Heart right ventricle (tissue), 16 donors: ENCODE measurements at regions of chr13 and their contacts with region 1.

Region 1: DNA sequence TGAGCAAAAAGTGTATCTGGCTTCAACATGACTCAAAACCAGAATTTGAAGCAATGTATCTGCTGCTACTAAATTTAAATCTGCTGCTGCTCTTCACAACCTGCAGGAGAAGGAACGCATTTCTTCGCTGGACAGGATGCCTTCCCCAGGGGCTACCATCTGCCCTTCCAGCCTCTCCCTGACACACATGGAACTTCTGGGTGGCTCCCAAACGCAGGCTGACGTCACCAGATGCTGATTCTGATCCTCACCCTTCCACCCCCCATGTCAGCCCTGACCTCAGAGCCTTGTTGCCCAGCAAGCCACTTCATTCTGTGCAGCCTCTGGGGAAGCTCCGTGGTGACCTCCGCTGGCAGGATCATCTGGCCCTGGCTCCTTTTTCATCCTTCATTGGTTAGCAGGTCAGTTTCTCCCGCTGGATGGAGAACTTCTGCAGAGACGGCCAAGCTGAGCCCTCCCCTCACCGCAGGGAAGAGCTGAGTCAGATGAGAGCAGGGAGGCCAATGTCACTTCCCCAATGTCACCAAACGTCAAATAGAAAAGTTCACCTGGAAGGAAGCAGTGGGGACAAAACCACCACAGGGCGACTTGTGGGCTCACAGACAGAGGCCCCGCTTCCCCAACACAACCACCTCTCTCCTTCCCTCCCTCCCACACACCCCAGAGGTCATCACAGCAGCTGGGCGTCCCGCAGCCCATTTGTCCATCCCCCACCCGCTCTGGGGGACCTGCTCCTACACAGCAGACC is 14.0 kb upstream of the RAB20 start:
- DNase-seq: peak; percentile 23 to 33
- ATAC-seq: peak in 7 of 8 donors; percentile 61 to 79 (median 65)
- H3K4me3 ChIP-seq: no peak overlapping the region
- H3K27ac ChIP-seq: no peak overlapping the region
- H3K4me1 ChIP-seq: peaks cover 0 to 13% (median 0%) of the 10 kb centered on the region in 9 donors
- H3K27me3 ChIP-seq: peaks cover 0 to 44% (median 28%) of the 10 kb centered on the region in 7 donors
- CTCF ChIP-seq: peak in 7 of 9 donors; percentile 7 to 39 (median 19)

Region 2: DNA sequence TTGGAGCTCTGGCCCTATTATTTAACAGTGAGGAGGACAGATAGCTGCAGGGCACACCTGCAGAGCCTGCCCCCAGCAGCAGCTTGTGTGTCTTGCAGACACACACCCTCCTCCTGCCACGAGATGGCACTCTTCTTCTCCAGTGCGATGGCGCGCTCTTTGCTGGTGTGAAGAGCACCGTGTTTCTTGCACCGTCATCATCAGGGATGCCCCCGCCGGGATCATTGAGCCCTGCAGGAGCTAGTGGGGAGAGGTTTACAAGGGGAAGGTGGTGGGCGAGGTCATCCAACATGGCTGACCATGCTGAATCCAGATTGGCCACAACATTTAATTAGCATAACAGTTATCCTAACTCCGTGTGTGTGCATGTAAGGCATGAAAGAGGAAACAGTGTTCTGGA is 119.6 kb before region 1 on chr13:
- intact Hi-C with region 1: loop called in 6 of 10 experiments (anchors 5 to 10 kb)
- DNase-seq: peak; percentile 64 to 74
- ATAC-seq: peak; percentile 79 to 92 (median 88)
- H3K4me3 ChIP-seq: no peak overlapping the region
- H3K27ac ChIP-seq: peak overlapping the region in 1 of 10 donors; percentile 10
- H3K4me1 ChIP-seq: peaks cover 0 to 12% (median 5%) of the 10 kb centered on the region in 9 donors
- H3K27me3 ChIP-seq: no peaks in the 10 kb centered on the region
- CTCF ChIP-seq: peak; percentile 55 to 89 (median 80)

Region 3: GRCh38 chr13:110463871-110464510 is 111.5 kb before region 1 on chr13:
- intact Hi-C with region 1: loop called in 6 of 10 experiments (anchors 5 to 10 kb)
- DNase-seq: no peak
- ATAC-seq: peak in 6 of 8 donors; percentile 15 to 51 (median 24)
- H3K4me3 ChIP-seq: no peak overlapping the region
- H3K27ac ChIP-seq: no peak overlapping the region
- H3K4me1 ChIP-seq: peaks cover 0 to 13% (median 0%) of the 10 kb centered on the region in 9 donors
- H3K27me3 ChIP-seq: no peaks in the 10 kb centered on the region
- CTCF ChIP-seq: no peak